Gastrocnemius medialis (tissue), 4 donors: ENCODE measurements at regions of chr2 and their contacts with region 1.

Region 1: DNA sequence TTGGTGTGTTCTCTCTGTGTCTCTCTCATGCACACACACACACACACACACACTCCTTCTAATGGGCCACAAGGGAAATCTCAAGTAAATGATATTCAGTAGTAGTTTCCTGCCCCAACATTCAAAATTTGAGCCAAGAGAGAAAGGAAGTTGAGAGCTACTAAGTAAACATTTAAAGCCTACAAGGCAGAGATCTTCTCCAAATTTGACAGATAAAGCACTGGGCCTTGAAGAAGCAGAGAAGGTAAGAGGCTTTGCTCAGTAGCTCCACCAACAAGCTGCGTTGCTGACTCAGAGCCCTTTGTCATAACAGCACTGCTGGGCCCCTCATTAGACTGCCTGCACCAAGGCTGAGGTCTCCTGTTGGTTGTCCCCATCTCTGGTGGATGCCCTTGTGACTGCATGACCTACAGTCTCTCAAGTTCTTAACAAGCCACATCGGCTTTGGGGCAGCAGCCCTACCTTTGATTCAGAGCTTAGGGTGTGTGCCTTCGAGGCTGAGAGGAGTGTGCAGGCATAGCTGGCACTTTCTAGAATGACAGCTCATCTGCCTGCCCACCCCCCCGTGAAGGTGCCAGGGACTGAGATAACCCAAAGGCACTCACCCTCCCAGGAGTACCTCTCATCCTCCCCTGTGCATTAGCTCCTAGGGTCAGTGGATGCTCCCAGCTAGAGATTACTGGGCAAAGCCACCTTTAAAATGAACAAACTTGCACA is 32.3 kb upstream of the NEB start:
- DNase-seq: no peak
- ATAC-seq: no peak
- H3K4me3 ChIP-seq: no peak overlapping the region
- H3K27ac ChIP-seq: peak overlapping the region; percentile 67 to 88 (median 82)
- H3K4me1 ChIP-seq: peaks cover 33 to 55% of the 10 kb centered on the region in 2 donors
- H3K27me3 ChIP-seq: no peaks in the 10 kb centered on the region
- CTCF ChIP-seq: no peak
- POLR2A ChIP-seq: no peak

Region 2: DNA sequence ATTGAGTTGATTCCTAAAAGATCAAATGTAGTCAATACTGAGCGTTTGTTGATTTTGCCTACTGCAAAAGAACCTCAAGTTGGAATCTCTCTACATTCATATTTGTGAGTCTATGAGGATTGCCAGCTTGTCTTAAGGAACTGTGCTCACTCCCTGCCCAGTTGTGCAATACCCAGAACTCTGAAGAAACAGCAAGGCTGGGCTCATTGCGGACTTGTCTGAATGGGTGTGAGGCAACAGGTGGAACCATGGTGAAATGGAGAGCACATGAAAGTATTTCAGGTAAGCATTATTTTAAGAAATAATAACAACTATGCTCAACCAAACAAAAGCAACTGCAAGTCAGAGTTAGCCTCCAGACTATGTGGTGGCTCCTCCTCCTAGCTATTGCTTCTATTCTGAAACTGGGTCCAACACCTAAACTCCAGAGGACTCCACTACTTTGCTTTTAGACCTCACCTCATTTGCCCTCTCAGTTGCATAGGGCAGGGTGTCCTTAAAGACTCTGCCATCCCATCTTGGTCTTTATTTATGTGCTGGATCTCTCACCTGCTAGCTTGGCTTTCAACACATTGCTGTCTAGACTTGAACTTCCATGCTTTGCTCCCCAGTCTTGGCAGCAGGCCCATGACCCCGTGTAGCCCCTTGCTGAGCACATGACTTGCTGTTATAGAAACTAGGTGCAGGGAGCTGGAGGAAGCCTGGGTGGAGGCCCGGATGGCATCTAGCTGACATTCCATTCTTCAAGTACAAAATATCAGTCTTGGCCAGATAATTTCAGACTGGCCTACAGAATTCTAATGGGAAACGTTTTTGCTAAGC is 156.5 kb after region 1 on chr2:
- in situ Hi-C with region 1: no loop called
- intact Hi-C with region 1: loop called (anchors 10 kb)
- DNase-seq: peak; percentile 61 to 86
- ATAC-seq: peak; percentile 92 to 98
- H3K4me3 ChIP-seq: no peak overlapping the region
- H3K27ac ChIP-seq: peak overlapping the region; percentile 58 to 76 (median 70)
- H3K4me1 ChIP-seq: peaks cover 11 to 13% of the 10 kb centered on the region in 2 donors
- H3K27me3 ChIP-seq: no peaks in the 10 kb centered on the region
- CTCF ChIP-seq: no peak
- POLR2A ChIP-seq: no peak

Region 3: DNA sequence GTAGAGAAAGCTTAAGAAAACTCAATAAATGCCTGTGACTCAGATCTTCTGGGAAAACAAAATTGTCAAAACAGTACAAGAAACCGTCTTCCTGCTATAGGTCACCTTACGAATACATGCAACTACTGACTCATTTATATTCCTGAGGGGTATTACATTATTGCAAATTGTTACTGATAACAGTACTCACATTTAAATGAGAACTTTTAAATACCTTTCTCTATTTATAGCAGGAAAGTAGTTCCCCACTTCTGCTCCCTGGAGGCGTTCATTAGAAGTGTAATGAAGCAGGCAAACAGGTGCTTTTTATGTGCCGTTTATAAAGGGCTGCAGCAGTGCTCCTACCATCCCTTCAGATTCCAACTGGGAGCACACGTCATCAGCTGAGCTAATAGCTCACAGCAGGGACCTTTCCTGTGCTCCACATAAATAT is 1777.1 kb after region 1 on chr2:
- in situ Hi-C with region 1: no loop called
- intact Hi-C with region 1: no loop called
- DNase-seq: no peak
- ATAC-seq: no peak
- H3K4me3 ChIP-seq: no peak overlapping the region
- H3K27ac ChIP-seq: no peak overlapping the region
- H3K4me1 ChIP-seq: no peaks in the 10 kb centered on the region
- H3K27me3 ChIP-seq: no peaks in the 10 kb centered on the region
- CTCF ChIP-seq: no peak
- POLR2A ChIP-seq: no peak